Right ventricle myocardium inferior (tissue), 1 donor: ENCODE measurements at regions of chrX and their contacts with region 1.

Region 1: GRCh38 chrX:103533511-103534216 is 14.4 kb upstream of the RAB40A start:
- DNase-seq: peak; percentile 63
- ATAC-seq: peak; percentile 67

Region 2: GRCh38 chrX:103774070-103774642 is 240.5 kb after region 1 on chrX:
- intact Hi-C with region 1: loop called (anchors 10 kb)
- DNase-seq: no peak
- ATAC-seq: peak; percentile 50

Region 3: DNA sequence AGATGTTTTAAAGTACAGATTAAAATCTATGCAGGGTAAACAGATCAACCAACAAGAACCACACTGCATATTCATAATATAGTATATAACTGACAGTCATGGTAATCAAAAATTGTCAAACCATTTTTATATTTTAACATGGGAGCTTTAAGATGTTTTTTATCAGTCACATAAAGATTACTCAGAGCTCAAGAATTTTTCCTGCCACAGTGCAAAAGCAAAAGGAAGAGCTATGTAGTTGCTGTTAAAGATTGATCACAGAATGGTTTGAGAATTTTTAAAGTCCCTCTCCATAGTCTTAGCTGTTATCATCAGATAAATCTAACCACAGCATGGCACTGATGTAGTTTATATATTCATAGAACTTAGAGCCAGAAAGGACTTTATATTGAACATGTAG is 289.9 kb after region 1 on chrX:
- intact Hi-C with region 1: loop called (anchors 5 kb)
- DNase-seq: no peak
- ATAC-seq: no peak

Region 4: DNA sequence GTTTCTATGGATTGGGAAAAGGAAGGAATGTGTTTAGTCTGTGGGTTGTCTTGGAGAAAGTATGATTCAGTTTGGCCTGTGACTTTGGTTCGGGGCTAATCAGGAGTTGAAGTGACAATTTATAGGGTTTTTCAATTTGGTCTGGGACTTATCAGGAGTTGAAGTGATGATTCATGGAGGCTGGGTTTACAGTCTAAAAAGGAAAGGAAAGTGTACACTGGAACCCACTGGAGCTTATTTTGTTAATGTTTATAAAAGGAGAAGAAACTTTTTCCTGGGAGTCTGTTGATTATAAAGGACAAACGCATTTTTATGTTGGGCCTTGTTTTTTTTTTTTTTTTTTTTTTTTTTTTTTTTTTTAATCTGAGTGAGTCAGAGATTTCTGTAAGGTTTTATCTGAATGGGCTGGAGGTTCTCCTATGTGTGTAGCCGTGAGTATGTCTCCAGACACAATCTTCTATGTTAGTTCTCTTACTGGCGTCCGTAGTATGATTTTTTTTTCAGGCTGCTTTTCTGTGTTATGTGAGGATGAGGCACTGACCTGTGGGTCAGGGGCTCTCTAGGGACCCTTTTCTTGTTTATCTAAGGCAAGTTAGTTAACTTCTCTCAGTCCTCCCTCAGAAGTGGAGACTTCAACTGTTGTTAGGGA is 331.3 kb after region 1 on chrX:
- intact Hi-C with region 1: no loop called
- DNase-seq: no peak
- ATAC-seq: no peak